ENCODE measurements at regions of chr2 and their contacts with region 1.

Region 1: GRCh38 chr2:136378712-136379595 is 261.0 kb upstream of the CXCR4 start:
- DNase-seq: peak; percentile 91
- H3K4me3 ChIP-seq: no peak overlapping the region
- H3K27ac ChIP-seq: peak overlapping the region; percentile 48
- H3K4me1 ChIP-seq: peaks cover 90% of the 10 kb centered on the region
- CTCF ChIP-seq: peak; percentile 99

Region 2: GRCh38 chr2:136075466-136075865 is 303.5 kb before region 1 on chr2:
- CTCF ChIA-PET with region 1: no interaction called
- POLR2A ChIA-PET with region 1: interaction called, 3 read pairs
- intact Hi-C with region 1: loop called (anchors 1 kb)
- DNase-seq: peak; percentile 84
- H3K4me3 ChIP-seq: peak overlapping the region; percentile 25
- H3K27ac ChIP-seq: no peak overlapping the region
- H3K4me1 ChIP-seq: peaks cover 50% of the 10 kb centered on the region
- CTCF ChIP-seq: peak; percentile 54

Region 3: GRCh38 chr2:136112317-136113208 is 266.4 kb before region 1 on chr2:
- CTCF ChIA-PET with region 1: no interaction called
- POLR2A ChIA-PET with region 1: interaction called, 6 read pairs
- intact Hi-C with region 1: loop called (anchors 1 kb)
- DNase-seq: no peak
- H3K4me3 ChIP-seq: peak overlapping the region; percentile 92
- H3K27ac ChIP-seq: peak overlapping the region; percentile 92
- H3K4me1 ChIP-seq: peaks cover 84% of the 10 kb centered on the region
- CTCF ChIP-seq: no peak

Region 4: DNA sequence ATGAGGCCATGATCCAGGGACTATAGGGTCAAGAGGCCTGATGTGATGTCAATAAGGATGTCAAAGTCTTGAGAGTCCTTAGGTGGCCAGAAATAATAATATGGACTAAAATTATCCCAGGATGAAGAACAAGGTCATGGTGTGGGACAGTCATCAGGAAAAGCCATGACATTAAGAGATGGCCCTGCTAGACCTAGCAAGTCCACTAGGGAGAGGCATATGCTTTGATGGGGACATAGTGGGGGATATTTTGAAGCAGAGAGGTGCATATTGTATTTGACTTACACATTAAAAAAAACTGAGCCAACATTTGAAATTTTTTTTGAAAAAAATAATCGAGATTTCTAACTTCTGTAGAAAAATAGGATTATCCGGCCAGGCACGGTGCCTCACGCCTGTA is 207.7 kb before region 1 on chr2:
- CTCF ChIA-PET with region 1: no interaction called
- POLR2A ChIA-PET with region 1: no interaction called
- intact Hi-C with region 1: loop called (anchors 1 kb)
- DNase-seq: peak; percentile 40
- H3K4me3 ChIP-seq: no peak overlapping the region
- H3K27ac ChIP-seq: no peak overlapping the region
- H3K4me1 ChIP-seq: peaks cover 23% of the 10 kb centered on the region
- CTCF ChIP-seq: peak; percentile 49; the same call in 1 of the 2 replicates

Region 5: DNA sequence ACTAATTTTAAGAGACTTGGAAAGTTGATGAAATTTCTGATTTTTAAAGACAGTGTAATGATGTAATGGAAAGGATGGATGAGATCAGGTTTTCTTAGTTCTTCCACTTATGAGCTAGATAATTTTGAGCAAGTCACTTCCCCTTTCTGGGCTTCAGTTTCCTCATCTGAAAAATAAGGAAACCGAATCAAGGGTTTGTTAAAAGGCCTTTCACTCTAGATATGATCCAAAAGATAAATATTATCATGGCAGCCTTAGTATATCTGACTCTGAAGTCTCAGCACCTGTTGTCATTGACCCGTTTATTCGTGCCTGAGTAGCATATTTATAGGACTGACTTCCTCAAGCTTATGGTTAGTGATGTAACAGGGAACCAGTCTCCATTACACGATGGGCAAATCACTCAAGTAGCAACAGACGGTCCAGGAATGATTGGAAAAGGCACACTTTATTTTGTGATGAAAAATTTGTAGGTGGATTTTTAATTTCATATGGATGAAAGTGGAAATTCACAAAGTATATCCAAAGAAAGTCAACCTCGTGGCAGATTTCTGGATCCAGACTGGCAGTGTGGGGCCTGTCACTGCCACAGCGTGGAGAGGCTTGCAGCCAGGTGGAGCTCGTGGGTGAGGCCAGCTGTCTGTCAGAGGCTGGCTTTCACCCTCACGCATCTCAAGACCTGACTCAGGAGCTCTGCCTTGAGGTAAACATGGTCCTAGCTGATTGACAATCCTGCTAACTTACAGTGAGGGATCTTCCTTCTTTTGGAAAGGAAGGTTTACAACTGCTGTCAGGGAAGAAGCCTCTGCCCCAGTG is 123.1 kb before region 1 on chr2:
- CTCF ChIA-PET with region 1: interaction called, 20 read pairs
- POLR2A ChIA-PET with region 1: interaction called, 30 read pairs
- intact Hi-C with region 1: loop called (anchors 1 kb)
- DNase-seq: peak; percentile 85
- H3K4me3 ChIP-seq: peak overlapping the region; percentile 26
- H3K27ac ChIP-seq: peak overlapping the region; percentile 79
- H3K4me1 ChIP-seq: peaks cover 72% of the 10 kb centered on the region
- CTCF ChIP-seq: peak; percentile 80

Region 6: DNA sequence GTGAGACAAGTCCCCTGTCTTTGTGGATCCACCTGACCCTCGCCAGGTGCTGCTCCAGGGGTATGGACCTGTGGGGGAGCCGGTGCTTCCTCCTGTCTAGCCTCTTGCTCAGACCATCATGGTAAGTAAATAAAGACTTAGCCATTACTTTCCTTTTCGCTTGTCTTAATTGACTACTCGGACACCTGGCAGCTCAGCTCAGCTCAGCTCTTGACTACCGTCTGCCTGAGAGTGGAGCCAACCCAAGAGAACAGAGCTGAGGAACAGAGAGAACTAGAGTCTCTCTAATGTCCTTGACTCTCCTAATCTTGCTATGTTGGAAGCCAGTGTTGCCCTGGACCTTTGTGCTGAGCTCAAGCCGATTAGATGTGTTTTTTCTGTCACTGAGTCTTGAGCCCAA is 90.7 kb before region 1 on chr2:
- CTCF ChIA-PET with region 1: no interaction called
- POLR2A ChIA-PET with region 1: no interaction called
- intact Hi-C with region 1: no loop called
- DNase-seq: no peak
- H3K4me3 ChIP-seq: no peak overlapping the region
- H3K27ac ChIP-seq: no peak overlapping the region
- H3K4me1 ChIP-seq: peaks cover 11% of the 10 kb centered on the region
- CTCF ChIP-seq: no peak

Region 7: DNA sequence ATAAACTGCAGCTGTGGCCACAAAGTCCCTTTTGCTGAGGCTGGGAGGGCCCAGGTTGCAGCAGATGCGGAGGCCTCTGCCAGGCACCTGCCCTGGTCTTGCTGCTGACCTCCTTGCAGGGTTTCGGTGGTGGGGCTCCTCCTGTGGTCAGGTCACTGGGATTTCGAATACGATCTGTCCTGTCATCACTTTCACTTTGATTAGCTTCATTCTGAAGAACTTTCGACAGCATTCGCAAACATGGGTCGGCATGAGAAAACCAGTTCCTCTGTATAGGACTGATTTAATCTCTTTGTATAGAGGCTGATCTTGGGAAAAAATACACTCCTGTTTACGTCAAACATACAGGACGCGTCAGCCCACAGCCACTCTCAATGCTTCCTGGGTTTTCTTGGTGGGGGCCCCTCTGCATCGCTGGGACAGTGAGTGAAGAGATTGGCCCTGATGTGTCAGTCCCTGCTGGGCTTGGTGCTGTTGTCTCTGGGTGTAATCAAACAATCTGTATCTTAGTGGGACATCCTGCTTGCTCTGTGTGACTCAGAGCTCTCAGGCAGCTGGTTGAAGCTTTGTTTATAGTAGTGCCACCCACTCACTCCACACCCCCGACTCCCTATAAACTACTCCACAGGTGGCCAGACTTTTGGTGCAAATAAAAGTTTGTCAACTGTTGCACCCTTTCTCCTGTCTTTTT is 51.6 kb before region 1 on chr2:
- CTCF ChIA-PET with region 1: no interaction called
- POLR2A ChIA-PET with region 1: interaction called, 7 read pairs
- intact Hi-C with region 1: loop called (anchors 2 kb)
- DNase-seq: peak; percentile 78
- H3K4me3 ChIP-seq: peak overlapping the region; percentile 63
- H3K27ac ChIP-seq: peak overlapping the region; percentile 81
- H3K4me1 ChIP-seq: peaks cover 74% of the 10 kb centered on the region
- CTCF ChIP-seq: no peak; the same call in 1 of the 2 replicates

Region 8: GRCh38 chr2:136359121-136359965 is 19.6 kb before region 1 on chr2:
- CTCF ChIA-PET with region 1: no interaction called
- POLR2A ChIA-PET with region 1: interaction called, 10 read pairs
- intact Hi-C with region 1: no loop called
- DNase-seq: peak; percentile 54
- H3K4me3 ChIP-seq: no peak overlapping the region
- H3K27ac ChIP-seq: peak overlapping the region; percentile 5
- H3K4me1 ChIP-seq: peaks cover 47% of the 10 kb centered on the region
- CTCF ChIP-seq: no peak

Region 9: GRCh38 chr2:136874258-136874657 is 495.3 kb after region 1 on chr2:
- CTCF ChIA-PET with region 1: no interaction called
- POLR2A ChIA-PET with region 1: no interaction called
- intact Hi-C with region 1: no loop called
- DNase-seq: peak; percentile 25
- H3K4me3 ChIP-seq: no peak overlapping the region
- H3K27ac ChIP-seq: no peak overlapping the region
- H3K4me1 ChIP-seq: no peaks in the 10 kb centered on the region
- CTCF ChIP-seq: peak; percentile 76

Measured in OCI-LY7 (cell line).